GM12878 (cell line): ENCODE measurements at regions of chr10 and their contacts with region 1.

Region 1: GRCh38 chr10:6580279-6581029 is 378 bp upstream of the PRKCQ start:
- DNase-seq: no peak
- ATAC-seq: peak; percentile 94
- H3K4me3 ChIP-seq: peak overlapping the region; percentile 37
- H3K27ac ChIP-seq: no peak overlapping the region
- H3K4me1 ChIP-seq: no peaks in the 10 kb centered on the region
- H3K27me3 ChIP-seq: peaks cover 3 to 5% of the 10 kb centered on the region in 2 experiments
- CTCF ChIP-seq: peak; percentile 25 to 61 (median 52); a peak in 4 of 6 replicates
- EP300 ChIP-seq: no peak
- POLR2A ChIP-seq: no peak
- RAD21 ChIP-seq: peak; percentile 15; the same call in 1 of the 2 replicates

Region 2: DNA sequence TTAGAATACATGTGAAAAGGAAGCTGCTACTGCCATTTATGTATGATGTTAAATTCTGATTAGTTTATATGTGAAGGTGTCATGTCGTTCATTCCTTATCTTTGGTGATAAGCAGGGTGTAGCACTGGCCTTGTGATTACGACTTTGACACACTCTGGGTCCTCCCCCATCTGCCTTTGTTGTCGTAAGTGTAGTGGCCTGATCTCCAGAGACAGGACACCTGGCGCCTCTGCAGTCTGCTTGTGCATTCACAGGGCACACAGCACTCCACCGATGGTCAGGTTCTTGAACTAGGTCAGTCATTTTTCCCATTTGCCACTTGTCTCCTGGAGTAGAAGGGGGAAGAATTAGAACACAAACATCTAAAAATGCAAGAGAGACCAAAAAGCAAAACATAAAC is 186.4 kb before region 1 on chr10:
- CTCF ChIA-PET with region 1: no interaction called
- POLR2A ChIA-PET with region 1: no interaction called
- RAD21 ChIA-PET with region 1: no interaction called
- SMC1A ChIA-PET with region 1: no interaction called
- in situ Hi-C with region 1: no loop called
- intact Hi-C with region 1: no loop called
- DNase-seq: no peak
- ATAC-seq: peak; percentile 26; the same call in 1 of the 3 replicates
- H3K4me3 ChIP-seq: no peak overlapping the region
- H3K27ac ChIP-seq: no peak overlapping the region
- H3K4me1 ChIP-seq: no peaks in the 10 kb centered on the region
- H3K27me3 ChIP-seq: peaks cover 0 to 5% of the 10 kb centered on the region in 2 experiments; a peak in 2 of 4 replicates
- CTCF ChIP-seq: no peak
- EP300 ChIP-seq: no peak
- POLR2A ChIP-seq: no peak
- RAD21 ChIP-seq: no peak

Region 3: DNA sequence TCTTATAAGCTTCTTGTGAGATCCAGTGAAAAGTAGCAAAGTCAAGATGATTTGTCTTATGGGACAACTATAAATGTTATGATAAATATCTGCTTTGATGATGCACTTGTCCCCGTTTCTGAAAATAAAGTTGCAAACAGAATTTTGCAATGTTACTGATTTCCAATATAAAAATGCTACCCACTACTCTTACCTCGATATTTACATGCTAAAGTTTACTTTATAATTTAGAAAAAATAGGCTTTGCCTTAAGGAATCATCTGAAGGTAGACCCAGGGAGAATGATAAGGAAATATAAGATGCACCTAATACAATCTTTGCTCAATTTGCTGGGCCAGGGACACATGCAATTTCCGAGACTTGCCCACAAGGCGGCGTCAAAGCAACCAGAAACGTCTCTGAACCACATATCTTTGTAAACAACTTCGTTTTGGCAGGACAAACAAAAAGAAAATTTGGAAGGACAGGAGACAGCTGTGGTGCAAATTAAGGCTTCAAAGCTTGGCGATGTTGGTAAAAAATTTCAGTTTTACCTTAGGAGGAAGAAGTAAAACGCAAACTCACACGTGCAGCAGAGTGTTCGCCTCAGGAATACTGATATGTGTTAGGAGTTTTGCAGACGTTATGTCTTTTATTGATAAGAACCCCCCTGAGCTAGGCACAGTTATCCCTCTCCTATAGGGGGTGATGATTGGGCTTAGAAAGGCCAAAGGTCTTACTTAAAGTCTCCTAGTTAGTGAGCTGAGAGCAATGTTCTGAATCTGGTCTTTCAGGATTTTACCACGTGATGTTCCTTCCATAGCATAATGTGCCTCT is 134.7 kb before region 1 on chr10:
- CTCF ChIA-PET with region 1: interaction called, 22 read pairs
- POLR2A ChIA-PET with region 1: interaction called, 3 read pairs
- RAD21 ChIA-PET with region 1: interaction called, 16 read pairs
- SMC1A ChIA-PET with region 1: interaction called, 11 read pairs
- in situ Hi-C with region 1: no loop called
- intact Hi-C with region 1: loop called (anchors 10 kb)
- DNase-seq: no peak
- ATAC-seq: peak; percentile 82
- H3K4me3 ChIP-seq: no peak overlapping the region
- H3K27ac ChIP-seq: no peak overlapping the region
- H3K4me1 ChIP-seq: no peaks in the 10 kb centered on the region
- H3K27me3 ChIP-seq: no peaks in the 10 kb centered on the region; a peak in 1 of 4 replicates
- CTCF ChIP-seq: peak; percentile 61 to 82 (median 67)
- EP300 ChIP-seq: no peak
- POLR2A ChIP-seq: no peak
- RAD21 ChIP-seq: peak; percentile 69

Region 4: GRCh38 chr10:6491841-6492609 is 88.4 kb before region 1 on chr10:
- CTCF ChIA-PET with region 1: interaction called, 4 read pairs
- POLR2A ChIA-PET with region 1: interaction called, 3 read pairs
- RAD21 ChIA-PET with region 1: interaction called, 4 read pairs
- SMC1A ChIA-PET with region 1: interaction called, 12 read pairs
- in situ Hi-C with region 1: no loop called
- intact Hi-C with region 1: no loop called
- DNase-seq: no peak
- ATAC-seq: peak; percentile 83
- H3K4me3 ChIP-seq: no peak overlapping the region
- H3K27ac ChIP-seq: no peak overlapping the region
- H3K4me1 ChIP-seq: no peaks in the 10 kb centered on the region
- H3K27me3 ChIP-seq: no peaks in the 10 kb centered on the region; a peak in 2 of 4 replicates
- CTCF ChIP-seq: no peak
- EP300 ChIP-seq: peak; percentile 87 to 96; a peak in 3 of 4 replicates
- POLR2A ChIP-seq: no peak
- RAD21 ChIP-seq: no peak

Region 5: GRCh38 chr10:6514844-6515780 is 65.3 kb before region 1 on chr10:
- CTCF ChIA-PET with region 1: interaction called, 8 read pairs
- POLR2A ChIA-PET with region 1: interaction called, 10 read pairs
- RAD21 ChIA-PET with region 1: no interaction called
- SMC1A ChIA-PET with region 1: interaction called, 4 read pairs
- in situ Hi-C with region 1: no loop called
- intact Hi-C with region 1: no loop called
- DNase-seq: no peak
- ATAC-seq: peak; percentile 43; the same call in 1 of the 3 replicates
- H3K4me3 ChIP-seq: no peak overlapping the region
- H3K27ac ChIP-seq: no peak overlapping the region
- H3K4me1 ChIP-seq: no peaks in the 10 kb centered on the region
- H3K27me3 ChIP-seq: peaks cover 0 to 8% of the 10 kb centered on the region in 2 experiments; a peak in 1 of 4 replicates
- CTCF ChIP-seq: no peak
- EP300 ChIP-seq: no peak
- POLR2A ChIP-seq: no peak
- RAD21 ChIP-seq: no peak

Region 6: DNA sequence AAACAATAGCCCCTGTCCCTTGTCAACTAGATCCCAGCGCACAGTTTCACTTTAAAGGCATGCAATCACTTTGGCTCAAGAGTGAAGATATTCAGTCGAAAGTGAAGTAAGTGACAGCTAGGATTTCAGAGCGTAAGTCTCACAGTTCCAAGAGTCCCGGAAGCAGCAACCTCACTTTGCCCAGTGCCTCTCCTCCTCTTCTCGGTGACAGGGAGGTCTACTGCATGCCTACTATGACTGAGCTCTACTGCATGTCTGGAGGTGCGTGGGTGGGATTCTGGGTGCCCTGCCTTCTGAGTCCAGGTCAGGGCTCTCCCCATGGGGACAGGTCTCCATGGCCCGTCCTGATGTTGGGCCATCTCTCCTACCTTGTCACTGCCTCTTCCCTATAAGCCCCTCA is 17.4 kb before region 1 on chr10:
- CTCF ChIA-PET with region 1: interaction called, 21 read pairs
- POLR2A ChIA-PET with region 1: interaction called, 5 read pairs
- RAD21 ChIA-PET with region 1: interaction called, 14 read pairs
- SMC1A ChIA-PET with region 1: interaction called, 28 read pairs
- in situ Hi-C with region 1: no loop called
- intact Hi-C with region 1: no loop called
- DNase-seq: no peak
- ATAC-seq: peak; percentile 65
- H3K4me3 ChIP-seq: no peak overlapping the region
- H3K27ac ChIP-seq: no peak overlapping the region
- H3K4me1 ChIP-seq: no peaks in the 10 kb centered on the region
- H3K27me3 ChIP-seq: peaks cover 0 to 6% of the 10 kb centered on the region in 2 experiments; a peak in 3 of 4 replicates
- CTCF ChIP-seq: no peak
- EP300 ChIP-seq: no peak
- POLR2A ChIP-seq: no peak
- RAD21 ChIP-seq: no peak

Region 7: GRCh38 chr10:6617309-6618076 is 37.0 kb after region 1 on chr10:
- CTCF ChIA-PET with region 1: no interaction called
- POLR2A ChIA-PET with region 1: no interaction called
- RAD21 ChIA-PET with region 1: no interaction called
- SMC1A ChIA-PET with region 1: no interaction called
- in situ Hi-C with region 1: no loop called
- intact Hi-C with region 1: no loop called
- DNase-seq: no peak
- ATAC-seq: no peak
- H3K4me3 ChIP-seq: no peak overlapping the region
- H3K27ac ChIP-seq: no peak overlapping the region
- H3K4me1 ChIP-seq: no peaks in the 10 kb centered on the region
- H3K27me3 ChIP-seq: no peaks in the 10 kb centered on the region
- CTCF ChIP-seq: no peak
- EP300 ChIP-seq: no peak
- POLR2A ChIP-seq: no peak
- RAD21 ChIP-seq: no peak

Region 8: DNA sequence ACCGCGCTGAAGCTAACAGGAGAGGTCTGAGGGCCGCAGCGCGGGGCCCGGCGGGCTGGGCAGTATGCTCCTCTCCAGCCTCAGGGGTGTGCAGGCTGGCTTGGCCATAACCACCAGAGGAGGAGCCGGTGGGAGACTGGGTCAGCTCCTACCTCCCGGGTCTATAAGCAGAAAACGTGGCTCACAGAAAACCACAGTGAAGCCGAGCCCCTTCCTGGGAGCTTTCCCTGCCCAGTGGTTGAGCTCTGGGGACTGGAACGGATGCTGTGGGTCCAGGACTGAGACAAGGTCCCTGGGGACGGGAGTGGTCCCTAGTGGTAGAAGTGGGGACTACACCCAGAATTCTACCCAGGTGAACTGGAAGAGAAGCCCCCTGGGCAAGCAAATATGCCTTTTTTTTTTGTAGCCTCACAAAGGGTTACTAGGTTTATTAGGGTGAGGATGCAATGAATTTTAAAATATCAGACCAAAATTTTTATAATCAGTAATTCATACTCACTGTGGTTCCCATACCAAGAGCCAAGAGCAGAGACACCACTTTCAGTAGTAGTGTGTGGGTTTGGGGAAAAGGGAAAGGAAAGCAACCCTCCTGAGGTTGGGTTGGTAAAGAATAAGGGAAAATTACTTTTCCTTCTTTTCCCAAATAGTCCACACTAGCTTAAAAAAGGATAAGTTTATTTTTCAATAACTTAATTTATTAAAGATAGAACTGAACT is 67.5 kb after region 1 on chr10:
- CTCF ChIA-PET with region 1: interaction called, 10 read pairs
- POLR2A ChIA-PET with region 1: no interaction called
- RAD21 ChIA-PET with region 1: interaction called, 3 read pairs
- SMC1A ChIA-PET with region 1: interaction called, 6 read pairs
- in situ Hi-C with region 1: no loop called
- intact Hi-C with region 1: no loop called
- DNase-seq: no peak
- ATAC-seq: peak; percentile 89
- H3K4me3 ChIP-seq: no peak overlapping the region
- H3K27ac ChIP-seq: no peak overlapping the region
- H3K4me1 ChIP-seq: no peaks in the 10 kb centered on the region
- H3K27me3 ChIP-seq: no peaks in the 10 kb centered on the region; a peak in 1 of 4 replicates
- CTCF ChIP-seq: peak; percentile 43 to 74 (median 65)
- EP300 ChIP-seq: no peak
- POLR2A ChIP-seq: no peak
- RAD21 ChIP-seq: peak; percentile 45